Calu3 (cell line): ENCODE measurements at regions of chr20 and their contacts with region 1.

Region 1: GRCh38 chr20:37534401-37535157 is 6.9 kb upstream of the BLCAP start:
- DNase-seq: peak; percentile 81
- H3K4me3 Mint-ChIP-seq: no peak overlapping the region
- H3K27ac Mint-ChIP-seq: no peak overlapping the region
- H3K4me1 Mint-ChIP-seq: peaks cover 38% of the 10 kb centered on the region
- H3K27me3 Mint-ChIP-seq: peaks cover 42% of the 10 kb centered on the region
- CTCF ChIP-seq: peak; percentile 85

Region 2: GRCh38 chr20:37202267-37202943 is 332.2 kb before region 1 on chr20:
- CTCF ChIA-PET with region 1: no interaction called
- intact Hi-C with region 1: loop called (anchors 1 kb)
- DNase-seq: peak; percentile 74
- H3K4me3 Mint-ChIP-seq: no peak overlapping the region
- H3K27ac Mint-ChIP-seq: peak overlapping the region; percentile 4
- H3K4me1 Mint-ChIP-seq: peaks cover 15% of the 10 kb centered on the region
- H3K27me3 Mint-ChIP-seq: no peaks in the 10 kb centered on the region
- CTCF ChIP-seq: peak; percentile 81

Region 3: DNA sequence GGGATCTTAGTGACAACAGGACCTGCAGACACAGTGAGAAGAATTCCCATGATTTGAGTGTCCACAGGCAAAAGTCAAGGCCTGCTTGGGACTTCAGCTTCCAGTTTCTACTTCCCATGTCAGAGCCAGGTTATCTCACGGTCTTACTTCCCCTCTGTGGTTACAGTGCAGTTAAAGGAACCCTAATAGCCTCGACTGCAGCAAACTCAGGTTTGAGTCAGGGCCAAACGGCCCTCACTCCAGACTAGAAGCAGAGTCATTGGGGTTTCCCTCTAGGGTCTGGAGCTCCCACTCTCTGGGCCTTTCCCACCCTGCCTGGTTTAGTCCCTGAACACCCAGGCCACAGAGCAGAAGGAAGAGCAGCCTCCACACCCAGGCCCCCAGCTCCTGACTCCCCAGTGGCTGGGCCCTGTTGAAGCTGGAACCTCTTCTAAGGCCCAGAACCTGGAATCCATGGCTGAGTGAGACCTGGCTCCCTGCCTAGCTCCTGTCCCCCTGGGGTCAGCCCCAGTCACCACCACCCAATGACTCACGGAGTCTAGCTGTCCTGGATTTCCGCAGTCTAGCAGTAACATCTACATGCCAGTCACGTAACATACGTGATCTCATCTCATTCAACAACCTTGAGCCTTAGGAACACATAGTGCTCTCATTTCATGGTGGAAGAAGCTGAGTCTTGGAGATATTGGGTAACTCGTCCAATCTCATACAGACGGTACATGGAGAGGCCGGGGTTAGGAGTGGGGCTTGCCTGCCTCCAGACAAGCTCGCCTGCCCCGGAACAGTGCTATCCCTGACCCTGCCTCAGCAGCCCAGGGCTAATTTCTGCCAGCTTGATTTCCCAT is 263.8 kb before region 1 on chr20:
- CTCF ChIA-PET with region 1: interaction called, 18 read pairs
- intact Hi-C with region 1: loop called (anchors 1 kb)
- DNase-seq: no peak
- H3K4me3 Mint-ChIP-seq: no peak overlapping the region
- H3K27ac Mint-ChIP-seq: no peak overlapping the region
- H3K4me1 Mint-ChIP-seq: peaks cover 10% of the 10 kb centered on the region
- H3K27me3 Mint-ChIP-seq: peaks cover 17% of the 10 kb centered on the region
- CTCF ChIP-seq: no peak

Region 4: DNA sequence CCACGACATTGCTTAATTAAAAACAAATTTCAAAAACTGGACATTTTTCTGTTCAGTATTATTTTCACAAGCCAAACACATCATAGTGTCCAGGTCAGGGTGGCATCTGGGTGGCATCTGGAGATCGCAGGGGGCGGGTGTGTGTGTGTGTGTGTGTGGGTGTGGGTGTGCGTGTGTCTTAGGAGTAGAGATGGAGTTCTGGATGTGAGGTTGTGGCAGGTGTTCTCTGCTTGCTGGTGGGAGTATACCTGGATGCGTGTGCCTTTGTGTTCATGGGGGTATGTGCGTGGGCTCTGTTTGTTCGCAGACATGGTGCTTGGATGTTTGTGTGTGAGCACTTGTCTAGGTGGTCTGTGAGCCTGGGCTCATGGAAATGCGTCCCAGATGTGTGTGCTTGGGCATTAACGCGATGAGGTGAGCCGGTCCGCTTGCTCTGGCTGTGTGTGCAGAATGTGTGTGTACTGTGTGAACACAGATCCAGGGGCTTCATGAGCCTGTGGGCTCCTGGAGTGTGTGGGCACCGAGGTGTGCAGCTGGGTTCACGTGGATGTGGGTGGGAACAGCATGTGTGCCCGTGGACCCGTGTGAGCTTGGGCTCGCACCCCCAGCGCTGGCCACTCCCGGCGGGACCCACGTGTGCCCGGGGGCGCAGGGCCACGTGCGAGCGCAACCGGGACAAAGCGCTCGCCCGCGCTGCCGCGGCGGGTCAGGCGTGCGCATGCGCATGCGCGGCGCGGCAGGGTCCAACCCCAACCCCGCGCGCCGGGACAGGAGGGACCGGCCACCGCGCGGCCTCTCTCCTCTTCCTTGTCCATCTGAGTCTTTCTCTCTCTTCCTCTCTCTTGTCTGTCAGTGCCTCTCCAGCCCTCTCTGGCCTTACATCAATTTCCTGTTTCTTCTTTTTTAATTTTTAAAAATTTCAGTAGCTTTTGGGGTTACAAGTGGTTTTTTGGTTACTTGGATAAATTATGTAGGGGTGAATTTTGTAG is 128.3 kb before region 1 on chr20:
- CTCF ChIA-PET with region 1: no interaction called
- intact Hi-C with region 1: loop called (anchors 5 kb)
- DNase-seq: peak; percentile 77
- H3K4me3 Mint-ChIP-seq: peak overlapping the region; percentile 63
- H3K27ac Mint-ChIP-seq: peak overlapping the region; percentile 69
- H3K4me1 Mint-ChIP-seq: peaks cover 37% of the 10 kb centered on the region
- H3K27me3 Mint-ChIP-seq: no peaks in the 10 kb centered on the region
- CTCF ChIP-seq: no peak